ENCODE measurements at regions of chr2 and their contacts with region 1.

Region 1: DNA sequence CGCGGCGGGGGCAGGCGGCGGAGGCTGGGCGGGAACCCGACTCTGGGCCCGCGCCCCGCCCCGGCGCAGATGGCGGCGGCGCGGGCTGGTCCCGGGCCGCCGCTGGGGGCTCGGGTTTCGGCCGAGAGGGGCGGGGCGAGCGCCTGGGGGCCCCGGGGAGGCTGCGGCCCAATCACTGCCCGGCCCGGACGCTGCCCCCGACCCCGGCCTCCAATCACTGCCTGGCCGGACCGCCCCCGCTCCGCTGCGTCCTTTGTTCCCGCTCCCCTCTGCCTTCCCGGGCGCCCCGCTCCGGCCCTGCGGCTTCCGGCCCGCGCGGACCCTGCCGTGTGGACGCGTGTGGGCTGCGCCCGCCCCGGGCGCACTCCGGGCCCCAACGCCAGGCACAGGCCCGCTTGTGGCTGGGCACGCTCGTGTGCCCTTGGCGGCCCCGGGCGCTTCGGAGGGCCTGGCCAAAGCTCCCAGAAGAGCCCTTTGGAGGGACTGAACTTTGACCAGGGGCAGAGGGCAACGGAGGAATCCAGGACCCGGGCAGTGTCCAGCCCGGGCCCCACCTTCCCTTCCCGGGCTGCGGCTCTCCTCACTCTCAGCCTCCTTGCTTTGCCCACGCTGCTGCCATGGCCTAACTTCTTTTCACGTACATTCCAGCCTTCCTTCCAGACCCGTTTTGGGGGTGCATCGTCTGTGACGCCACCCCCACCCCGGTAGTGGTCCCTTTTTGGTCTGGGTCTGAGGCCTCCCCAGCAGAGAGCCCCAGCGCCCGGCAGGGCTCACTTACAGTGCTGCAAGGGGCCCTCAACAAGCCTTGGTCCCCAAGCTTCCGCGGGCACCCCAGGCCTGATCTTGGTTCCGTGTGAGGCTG is 27.1 kb upstream of the PTMA start:
- DNase-seq: peak; percentile 61 to 93
- H3K4me3 ChIP-seq: peak overlapping the region; percentile 60
- H3K27ac ChIP-seq: peak overlapping the region; percentile 92
- H3K4me1 ChIP-seq: peaks cover 24% of the 10 kb centered on the region
- H3K27me3 ChIP-seq: no peaks in the 10 kb centered on the region
- CTCF ChIP-seq: no peak

Region 2: GRCh38 chr2:231539991-231540390 is 141.2 kb before region 1 on chr2:
- CTCF ChIA-PET with region 1: no interaction called
- POLR2A ChIA-PET with region 1: interaction called, 13 read pairs
- intact Hi-C with region 1: no loop called
- DNase-seq: no peak
- H3K4me3 ChIP-seq: no peak overlapping the region
- H3K27ac ChIP-seq: no peak overlapping the region
- H3K4me1 ChIP-seq: peaks cover under 1% of the 10 kb centered on the region; the same call in 1 of the 2 replicates
- H3K27me3 ChIP-seq: peaks cover 21% of the 10 kb centered on the region
- CTCF ChIP-seq: no peak

Region 3: DNA sequence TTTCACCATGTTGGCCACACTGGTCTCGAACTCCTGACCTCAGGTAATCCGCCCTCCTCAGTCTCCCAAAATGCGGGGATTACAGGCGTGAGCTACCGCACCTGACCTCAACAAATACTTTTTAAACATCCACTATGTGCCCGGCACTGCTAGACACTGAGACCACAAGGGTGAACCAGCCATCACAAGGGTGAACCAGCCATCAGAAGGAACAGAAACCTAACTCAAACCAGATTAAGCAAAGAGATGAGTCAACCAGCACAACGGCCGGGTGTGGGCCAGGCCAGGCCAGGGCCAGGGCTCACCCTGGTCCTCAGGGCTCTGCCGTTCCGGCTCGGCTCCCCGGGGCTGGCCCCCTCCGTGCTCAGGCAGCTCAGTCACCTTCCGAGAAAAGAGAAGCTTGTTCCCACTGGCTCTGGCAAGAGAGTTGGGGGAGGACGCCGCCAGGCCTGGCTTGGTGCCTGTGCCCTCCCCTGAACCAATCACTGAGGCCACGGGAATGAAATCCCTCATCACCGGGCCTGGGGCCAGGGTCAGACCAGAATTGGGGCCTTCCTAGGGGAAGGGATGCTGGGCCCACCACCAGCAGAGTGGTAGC is 84.1 kb before region 1 on chr2:
- CTCF ChIA-PET with region 1: no interaction called
- POLR2A ChIA-PET with region 1: no interaction called
- intact Hi-C with region 1: no loop called
- DNase-seq: no peak
- H3K4me3 ChIP-seq: no peak overlapping the region
- H3K27ac ChIP-seq: no peak overlapping the region
- H3K4me1 ChIP-seq: no peaks in the 10 kb centered on the region
- H3K27me3 ChIP-seq: no peaks in the 10 kb centered on the region
- CTCF ChIP-seq: no peak

Region 4: DNA sequence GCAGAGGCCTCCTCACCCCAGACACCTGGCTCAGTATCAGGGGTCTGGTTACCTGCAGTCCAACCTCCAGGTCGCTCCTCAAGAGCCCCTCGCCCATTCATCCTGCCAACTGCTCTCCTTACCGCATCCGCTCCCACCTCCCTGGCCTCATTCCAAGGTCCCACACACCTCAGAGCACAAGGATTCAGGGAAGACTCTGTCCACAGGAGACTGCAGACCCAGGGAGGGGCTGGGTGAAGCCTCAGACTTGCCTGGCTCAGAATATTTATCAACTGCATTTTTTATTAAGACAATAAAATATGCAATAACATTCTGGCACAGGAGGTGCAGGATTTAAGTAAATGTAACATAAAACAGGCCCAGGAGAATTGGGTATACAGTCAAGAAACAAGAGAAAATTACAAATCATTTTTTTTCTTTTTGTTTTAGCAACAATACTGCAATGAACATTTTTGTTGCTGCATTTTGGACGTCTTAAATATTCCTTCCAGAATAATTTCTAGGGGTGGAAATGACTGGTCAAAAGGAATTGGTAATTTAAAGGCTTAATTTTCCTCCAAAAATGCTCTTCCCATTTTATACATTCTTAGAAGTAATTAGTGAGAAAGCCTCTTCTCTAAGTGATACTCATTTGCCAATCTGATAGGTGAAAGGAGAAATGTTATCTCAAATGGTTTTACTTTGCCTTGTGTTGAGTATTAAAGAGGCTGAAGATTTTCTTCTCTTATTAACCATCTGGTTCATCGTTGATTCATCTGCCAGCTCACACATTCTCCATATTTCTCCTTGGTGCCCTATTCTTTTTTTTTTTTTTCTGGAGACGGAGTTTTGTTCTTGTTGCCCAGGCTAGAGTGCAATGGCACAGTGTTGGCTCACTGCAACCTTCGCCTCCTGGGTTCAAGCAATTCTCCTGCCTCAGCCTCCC is 46.0 kb before region 1 on chr2:
- CTCF ChIA-PET with region 1: no interaction called
- POLR2A ChIA-PET with region 1: no interaction called
- intact Hi-C with region 1: no loop called
- DNase-seq: no peak
- H3K4me3 ChIP-seq: no peak overlapping the region
- H3K27ac ChIP-seq: no peak overlapping the region
- H3K4me1 ChIP-seq: no peaks in the 10 kb centered on the region
- H3K27me3 ChIP-seq: no peaks in the 10 kb centered on the region
- CTCF ChIP-seq: no peak

Region 5: GRCh38 chr2:231769170-231770136 is 88.2 kb after region 1 on chr2:
- CTCF ChIA-PET with region 1: no interaction called
- POLR2A ChIA-PET with region 1: no interaction called
- intact Hi-C with region 1: no loop called
- DNase-seq: no peak
- H3K4me3 ChIP-seq: no peak overlapping the region
- H3K27ac ChIP-seq: no peak overlapping the region
- H3K4me1 ChIP-seq: no peaks in the 10 kb centered on the region
- H3K27me3 ChIP-seq: no peaks in the 10 kb centered on the region
- CTCF ChIP-seq: no peak

Region 6: DNA sequence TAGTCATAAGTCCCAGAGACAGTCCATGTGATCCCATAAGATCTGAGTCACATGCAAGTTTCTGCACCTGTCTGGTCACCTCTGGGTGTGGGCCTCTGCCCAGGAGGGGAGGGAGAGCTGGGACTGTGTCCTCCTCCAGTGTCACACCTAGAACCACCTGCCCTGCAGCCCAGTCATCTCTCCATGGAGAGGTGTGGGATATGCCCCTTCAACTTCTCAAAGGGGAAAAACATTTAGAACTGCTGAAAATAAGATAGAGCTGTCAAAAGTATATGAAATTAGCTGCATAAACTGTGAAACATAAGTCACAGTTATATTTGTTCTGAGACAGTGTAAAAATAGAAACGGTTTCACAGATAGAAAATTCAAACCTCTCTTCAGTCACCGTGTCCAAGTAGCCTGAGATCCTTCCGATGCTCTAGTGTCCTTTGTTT is 1276.5 kb after region 1 on chr2:
- CTCF ChIA-PET with region 1: no interaction called
- POLR2A ChIA-PET with region 1: no interaction called
- intact Hi-C with region 1: no loop called
- DNase-seq: peak; percentile 29 to 48
- H3K4me3 ChIP-seq: no peak overlapping the region
- H3K27ac ChIP-seq: no peak overlapping the region
- H3K4me1 ChIP-seq: peaks cover 8% of the 10 kb centered on the region; the same call in 1 of the 2 replicates
- H3K27me3 ChIP-seq: no peaks in the 10 kb centered on the region
- CTCF ChIP-seq: no peak

Measured in PC-9 (cell line).